MCF 10A (cell line): ENCODE measurements at regions of chr14 and their contacts with region 1.

Region 1: GRCh38 chr14:75660630-75661494 is at the starts of genes ERG28 and TTLL5:
- DNase-seq: peak; percentile 99
- H3K4me3 Mint-ChIP-seq: peak within 1 kb of the TSS; percentile 98
- H3K27ac Mint-ChIP-seq: peak within 1 kb of the TSS; percentile 97
- H3K4me1 Mint-ChIP-seq: peaks cover 17% of the 10 kb centered on the region
- H3K27me3 Mint-ChIP-seq: no peaks in the 10 kb centered on the region
- CTCF ChIP-seq: no peak
- total RNA-seq, gene ERG28: 10.4 and 11.1 TPM in 2 replicates
- total RNA-seq, gene TTLL5: 29.0 and 31.7 TPM in 2 replicates

Region 2: GRCh38 chr14:75648066-75648838 is 12.6 kb before region 1 on chr14:
- CTCF ChIA-PET with region 1: interaction called, 12 read pairs
- POLR2A ChIA-PET with region 1: interaction called, 76 read pairs
- intact Hi-C with region 1: no loop called
- DNase-seq: peak; percentile 94
- H3K4me3 Mint-ChIP-seq: peak overlapping the region; percentile 50
- H3K27ac Mint-ChIP-seq: peak overlapping the region; percentile 55
- H3K4me1 Mint-ChIP-seq: peaks cover 41% of the 10 kb centered on the region
- H3K27me3 Mint-ChIP-seq: no peaks in the 10 kb centered on the region
- CTCF ChIP-seq: no peak

Region 3: DNA sequence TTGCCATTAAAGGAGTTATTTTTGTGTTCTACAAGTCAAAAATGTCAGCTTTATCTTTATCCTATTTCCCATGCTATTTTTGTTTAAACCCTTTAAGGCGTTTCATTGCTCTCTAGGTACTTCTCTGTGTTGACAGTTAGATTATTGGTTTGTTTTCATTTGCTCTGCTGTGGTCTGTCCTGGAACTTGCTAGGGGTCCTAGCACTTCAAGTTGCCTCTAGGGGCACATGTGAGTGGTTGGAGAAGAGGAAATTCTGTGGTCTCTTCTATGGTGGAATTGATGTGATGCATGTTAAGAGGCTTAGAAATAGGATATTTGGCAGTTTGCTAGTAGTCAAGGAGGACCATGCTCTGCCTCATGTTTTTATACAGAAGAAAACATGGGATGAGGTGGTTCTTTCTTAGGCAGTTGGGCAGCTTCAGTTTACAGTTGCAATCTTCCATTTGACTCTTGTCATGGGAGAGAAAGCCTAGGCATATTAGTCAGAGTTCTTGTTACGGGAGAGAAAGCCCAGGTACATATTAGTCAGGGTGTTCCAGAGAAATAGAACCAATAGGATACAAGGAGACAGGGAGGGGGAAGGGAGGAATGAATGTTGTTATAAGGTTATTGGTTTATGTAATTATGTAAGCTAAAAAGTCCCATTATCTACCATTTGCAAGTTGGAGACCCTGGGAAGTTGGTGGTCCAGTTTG is 14.6 kb after region 1 on chr14:
- CTCF ChIA-PET with region 1: interaction called, 3 read pairs
- POLR2A ChIA-PET with region 1: interaction called, 11 read pairs
- intact Hi-C with region 1: no loop called
- DNase-seq: peak; percentile 21
- H3K4me3 Mint-ChIP-seq: no peak overlapping the region
- H3K27ac Mint-ChIP-seq: peak overlapping the region; percentile 11
- H3K4me1 Mint-ChIP-seq: peaks cover 9% of the 10 kb centered on the region
- H3K27me3 Mint-ChIP-seq: no peaks in the 10 kb centered on the region
- CTCF ChIP-seq: no peak

Region 4: DNA sequence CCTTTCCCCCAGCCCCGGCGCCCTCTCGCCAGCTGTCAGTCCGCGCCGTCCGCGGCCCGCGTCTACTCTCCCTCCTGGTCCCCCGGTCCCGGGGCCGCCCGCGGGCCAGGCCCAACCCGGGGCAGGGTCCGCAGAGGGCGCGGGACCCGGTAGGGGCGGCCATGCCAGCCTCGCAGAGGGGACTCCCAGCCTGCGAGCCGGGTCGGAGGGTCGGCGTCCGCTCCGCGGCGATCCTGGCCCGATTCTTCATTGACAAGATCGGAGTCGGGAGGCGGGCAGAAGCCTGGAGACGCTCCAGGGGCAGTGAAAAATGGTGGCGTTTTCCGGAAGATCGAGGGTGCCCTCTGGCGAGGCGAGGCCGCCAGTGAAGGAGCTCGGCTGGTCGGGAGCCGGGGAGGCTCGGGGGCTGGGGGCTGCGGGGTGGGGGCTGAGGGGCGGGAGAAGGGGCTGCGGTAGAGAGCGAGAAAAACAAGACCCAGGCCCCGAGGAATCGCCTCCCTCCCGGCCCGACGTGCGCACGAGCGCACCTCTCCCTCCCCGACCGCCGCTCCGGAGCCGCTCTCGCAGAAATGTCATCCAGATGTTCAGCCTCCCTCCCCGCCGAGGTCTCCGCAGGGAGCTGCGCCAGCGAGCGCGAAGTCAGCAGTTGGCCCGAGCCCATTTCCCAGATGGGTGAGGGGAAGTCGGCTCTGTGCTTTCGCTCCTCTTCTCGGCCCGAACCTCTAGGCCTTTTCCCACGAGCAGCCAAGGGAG is 321.6 kb after region 1 on chr14:
- CTCF ChIA-PET with region 1: interaction called, 4 read pairs
- POLR2A ChIA-PET with region 1: interaction called, 10 read pairs
- intact Hi-C with region 1: loop called (anchors 5 kb)
- DNase-seq: peak; percentile 81
- H3K4me3 Mint-ChIP-seq: peak overlapping the region; percentile 73
- H3K27ac Mint-ChIP-seq: peak overlapping the region; percentile 78
- H3K4me1 Mint-ChIP-seq: peaks cover 34% of the 10 kb centered on the region
- H3K27me3 Mint-ChIP-seq: no peaks in the 10 kb centered on the region
- CTCF ChIP-seq: peak; percentile 72

Region 5: GRCh38 chr14:76040704-76041103 is 379.8 kb after region 1 on chr14:
- CTCF ChIA-PET with region 1: no interaction called
- POLR2A ChIA-PET with region 1: no interaction called
- intact Hi-C with region 1: no loop called
- DNase-seq: no peak
- H3K4me3 Mint-ChIP-seq: no peak overlapping the region
- H3K27ac Mint-ChIP-seq: no peak overlapping the region
- H3K4me1 Mint-ChIP-seq: no peaks in the 10 kb centered on the region
- H3K27me3 Mint-ChIP-seq: no peaks in the 10 kb centered on the region
- CTCF ChIP-seq: no peak

Region 6: DNA sequence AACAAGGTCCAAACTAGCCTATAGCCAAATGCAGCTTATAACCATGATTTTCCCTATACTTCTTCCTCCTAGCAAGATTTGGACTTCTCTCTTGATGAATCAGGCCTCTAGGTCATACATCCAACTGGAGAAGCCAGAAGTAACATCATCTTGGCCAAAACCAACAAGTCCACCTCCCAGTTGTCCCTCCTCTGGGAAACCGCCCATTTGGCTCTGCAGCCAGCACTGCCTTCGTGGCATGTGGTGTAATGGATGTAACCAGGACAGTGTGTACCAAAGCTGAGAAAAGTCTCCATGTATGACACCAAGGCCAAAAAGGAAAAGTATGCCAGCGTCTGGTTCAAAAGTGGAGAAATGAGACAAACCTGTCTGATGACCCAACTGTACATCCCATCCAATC is 1041.1 kb after region 1 on chr14:
- CTCF ChIA-PET with region 1: no interaction called
- POLR2A ChIA-PET with region 1: no interaction called
- intact Hi-C with region 1: no loop called
- DNase-seq: no peak
- H3K4me3 Mint-ChIP-seq: no peak overlapping the region
- H3K27ac Mint-ChIP-seq: no peak overlapping the region
- H3K4me1 Mint-ChIP-seq: no peaks in the 10 kb centered on the region
- H3K27me3 Mint-ChIP-seq: peaks cover 32% of the 10 kb centered on the region
- CTCF ChIP-seq: no peak